ENCODE measurements at regions of chr17 and their contacts with region 1.

Region 1: GRCh38 chr17:11144358-11145233 is 96.4 kb upstream of the SHISA6 start:
- DNase-seq: peak in 1 of 2 donors; percentile 23
- H3K4me3 ChIP-seq: no peak overlapping the region
- CTCF ChIP-seq: no peak
- POLR2A ChIP-seq: no peak

Region 2: GRCh38 chr17:10888858-10889257 is 255.7 kb before region 1 on chr17:
- intact Hi-C with region 1: loop called (anchors 5 kb)
- DNase-seq: no peak
- H3K4me3 ChIP-seq: no peak overlapping the region
- CTCF ChIP-seq: no peak
- POLR2A ChIP-seq: no peak

Region 3: DNA sequence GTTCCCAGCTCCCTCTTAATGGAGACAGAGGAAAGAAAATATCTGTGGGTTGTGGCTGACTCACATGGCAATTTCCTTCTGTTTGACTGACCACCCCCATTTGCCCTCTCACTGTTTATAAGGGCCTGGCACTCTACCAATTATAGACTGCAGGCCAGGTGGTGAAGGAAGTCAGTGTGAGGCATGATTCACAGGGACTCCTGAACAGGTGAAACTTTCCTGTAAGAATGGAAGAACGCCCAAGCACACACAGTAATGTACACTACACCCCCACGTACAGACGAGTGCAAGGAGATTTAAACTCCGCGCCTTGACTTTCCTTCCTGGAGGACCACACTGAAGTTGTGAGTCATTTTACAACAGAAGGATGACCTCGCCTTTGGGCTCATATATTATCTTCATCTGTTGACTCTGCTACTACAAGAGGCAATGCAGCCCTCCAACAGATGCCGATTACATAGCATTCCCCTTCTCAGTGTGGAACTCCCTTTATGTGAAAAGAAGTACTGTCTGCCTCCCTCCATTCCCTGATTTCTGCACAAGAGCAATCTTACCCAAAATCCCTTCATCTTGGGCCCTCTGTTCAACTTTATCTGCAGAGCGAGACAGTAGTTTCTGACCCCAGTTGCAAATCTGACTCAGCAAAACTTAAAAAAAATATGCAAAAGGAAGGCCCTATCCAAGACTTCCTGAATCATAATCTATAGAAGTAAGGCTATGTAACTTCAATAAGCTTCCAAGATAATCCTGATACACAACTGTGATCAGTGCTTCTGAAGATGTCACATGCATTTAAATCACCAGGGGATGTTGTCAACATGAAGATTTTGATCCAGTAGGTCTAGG is 260.1 kb after region 1 on chr17:
- intact Hi-C with region 1: no loop called
- DNase-seq: no peak
- H3K4me3 ChIP-seq: no peak overlapping the region
- CTCF ChIP-seq: no peak
- POLR2A ChIP-seq: no peak

Measured in lower leg skin (tissue), 4 donors.